WTC11 (cell line): ENCODE measurements at regions of chr1 and their contacts with region 1.

Region 1: DNA sequence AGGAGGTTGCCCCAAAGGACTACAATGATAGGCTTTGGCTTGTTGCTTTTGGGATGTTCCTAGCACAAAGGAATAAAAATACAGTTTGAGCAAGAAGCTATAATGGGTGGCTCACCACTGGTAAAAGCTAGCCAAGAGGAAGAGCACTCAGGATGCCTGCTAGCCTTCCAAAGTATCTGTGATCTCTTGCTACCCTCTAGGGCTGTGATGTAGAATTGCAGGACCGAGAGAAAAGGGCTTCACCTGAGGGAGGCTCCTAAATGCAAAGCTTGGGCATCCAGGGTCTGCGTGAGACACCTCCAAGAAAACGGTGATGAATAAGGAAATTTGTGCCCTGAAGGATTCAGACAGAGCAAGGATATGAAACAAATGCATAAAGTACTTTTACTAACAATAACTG is 17.7 kb downstream of the IVL start:
- DNase-seq: no peak
- ATAC-seq: peak; percentile 34; the same call in 1 of the 2 replicates
- H3K4me3 Mint-ChIP-seq: no peak overlapping the region
- H3K27ac Mint-ChIP-seq: no peak overlapping the region
- H3K4me1 Mint-ChIP-seq: no peaks in the 10 kb centered on the region
- H3K27me3 Mint-ChIP-seq: no peaks in the 10 kb centered on the region
- CTCF ChIP-seq: no peak

Region 2: DNA sequence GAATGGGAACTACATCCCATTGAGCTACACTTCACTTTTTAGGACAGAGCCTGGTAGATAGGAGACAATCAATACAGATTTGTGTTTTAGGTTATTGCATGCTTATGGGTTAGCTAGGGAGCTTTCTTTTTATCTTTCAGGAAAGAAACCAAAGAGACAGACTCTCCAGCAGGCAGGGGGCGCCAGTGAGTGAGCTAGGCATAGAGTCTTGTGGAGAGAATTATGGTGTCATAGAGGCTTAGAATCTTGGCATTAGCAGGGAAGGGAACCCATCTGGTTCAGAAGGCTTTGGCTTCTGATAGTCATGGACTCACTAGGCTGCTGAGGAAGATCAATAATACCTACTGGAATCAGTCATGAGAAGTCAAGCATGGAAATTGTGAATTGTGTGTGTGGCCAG is 48.0 kb before region 1 on chr1 and contains the start of gene SMCP:
- CTCF ChIA-PET with region 1: interaction called, 12 read pairs
- POLR2A ChIA-PET with region 1: no interaction called
- DNase-seq: peak; percentile 75
- ATAC-seq: no peak
- H3K4me3 Mint-ChIP-seq: no peak within 1 kb of the TSS
- H3K27ac Mint-ChIP-seq: no peak within 1 kb of the TSS
- H3K4me1 Mint-ChIP-seq: no peaks in the 10 kb centered on the region
- H3K27me3 Mint-ChIP-seq: no peaks in the 10 kb centered on the region; the same call in 1 of the 2 replicates
- CTCF ChIP-seq: peak; percentile 47
- total RNA-seq, gene SMCP: not detected in 3 replicates

Region 3: GRCh38 chr1:152953761-152954160 is 27.7 kb after region 1 on chr1:
- CTCF ChIA-PET with region 1: no interaction called
- POLR2A ChIA-PET with region 1: no interaction called
- DNase-seq: no peak
- ATAC-seq: no peak
- H3K4me3 Mint-ChIP-seq: no peak overlapping the region
- H3K27ac Mint-ChIP-seq: no peak overlapping the region
- H3K4me1 Mint-ChIP-seq: no peaks in the 10 kb centered on the region
- H3K27me3 Mint-ChIP-seq: peaks cover 4% of the 10 kb centered on the region
- CTCF ChIP-seq: no peak